ENCODE measurements at regions of chr19 and their contacts with region 1.

Region 1: GRCh38 chr19:2977001-2977685 is at the start of gene TLE6:
- DNase-seq: peak; percentile 98 to 99 (median 99)
- ATAC-seq: peak; percentile 93
- H3K4me3 ChIP-seq: peak within 1 kb of the TSS; percentile 28
- H3K27ac ChIP-seq: peak within 1 kb of the TSS; percentile 66
- H3K4me1 ChIP-seq: peaks cover 2% of the 10 kb centered on the region
- H3K27me3 ChIP-seq: no peaks in the 10 kb centered on the region
- total RNA-seq, gene TLE6: 0.28 to 2.2 (median 1.2) TPM

Region 2: GRCh38 chr19:3012621-3013260 is 35.6 kb after region 1 on chr19:
- intact Hi-C with region 1: no loop called
- DNase-seq: no peak
- ATAC-seq: peak; percentile 52 to 55
- H3K4me3 ChIP-seq: no peak overlapping the region
- H3K27ac ChIP-seq: no peak overlapping the region
- H3K4me1 ChIP-seq: no peaks in the 10 kb centered on the region
- H3K27me3 ChIP-seq: no peaks in the 10 kb centered on the region

Region 3: GRCh38 chr19:3035542-3036118 is 58.5 kb after region 1 on chr19:
- intact Hi-C with region 1: loop called in 2 of 4 experiments (anchors 5 to 10 kb)
- DNase-seq: peak; percentile 98 to 99 (median 99)
- ATAC-seq: peak; percentile 96
- H3K4me3 ChIP-seq: peak overlapping the region; percentile 72
- H3K27ac ChIP-seq: peak overlapping the region; percentile 88
- H3K4me1 ChIP-seq: no peaks in the 10 kb centered on the region
- H3K27me3 ChIP-seq: no peaks in the 10 kb centered on the region

Region 4: GRCh38 chr19:3185482-3186376 is 208.6 kb after region 1 on chr19 and contains the start of gene NCLN:
- intact Hi-C with region 1: no loop called
- DNase-seq: peak; percentile 95 to 98 (median 98)
- ATAC-seq: peak; percentile 94 to 95
- H3K4me3 ChIP-seq: peak within 1 kb of the TSS; percentile 90
- H3K27ac ChIP-seq: peak within 1 kb of the TSS; percentile 73
- H3K4me1 ChIP-seq: peaks cover 6% of the 10 kb centered on the region
- H3K27me3 ChIP-seq: no peaks in the 10 kb centered on the region
- total RNA-seq, gene NCLN: 25.8 to 36.6 (median 27.9) TPM